ENCODE measurements at regions of chr3 and their contacts with region 1.

Region 1: GRCh38 chr3:149657926-149658733 is at the start of gene WWTR1:
- DNase-seq: peak; percentile 26
- H3K4me3 Mint-ChIP-seq: peak within 1 kb of the TSS; percentile 90
- H3K27ac Mint-ChIP-seq: peak within 1 kb of the TSS; percentile 73
- H3K4me1 Mint-ChIP-seq: peaks cover 22% of the 10 kb centered on the region
- H3K27me3 Mint-ChIP-seq: peaks cover 39% of the 10 kb centered on the region
- total RNA-seq, gene WWTR1: 2.6 TPM in 2 replicates

Region 2: DNA sequence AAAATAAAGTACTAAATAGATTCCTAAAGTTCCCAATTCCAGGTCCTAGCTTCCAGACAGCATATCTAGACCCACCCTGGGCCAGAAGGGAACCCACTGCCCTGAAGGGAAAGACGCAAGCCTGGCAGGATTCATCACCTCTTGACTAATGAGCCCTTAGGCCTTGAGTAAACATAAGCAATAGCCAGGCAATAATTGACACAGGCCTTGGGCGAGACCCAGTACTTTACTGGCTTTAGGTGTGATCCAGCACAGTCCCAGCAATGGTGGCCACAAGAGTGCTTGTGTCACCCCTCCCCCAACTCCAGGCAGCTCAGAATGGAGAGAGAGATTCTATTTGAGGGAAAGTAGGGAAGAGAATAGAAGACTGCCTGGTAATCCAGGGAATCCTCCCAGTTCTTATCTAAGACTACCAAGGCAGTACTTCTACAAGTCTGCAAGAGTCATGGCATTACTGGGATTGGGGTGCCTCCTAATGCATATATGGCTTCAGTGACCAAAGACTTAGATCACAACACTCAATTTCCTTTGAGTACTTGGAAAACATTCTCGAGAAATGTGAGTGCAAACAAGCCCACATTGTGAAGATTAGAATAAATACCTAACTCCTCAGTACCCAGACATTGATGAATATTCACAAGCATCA is 30.1 kb after region 1 on chr3:
- intact Hi-C with region 1: no loop called
- DNase-seq: no peak
- H3K4me3 Mint-ChIP-seq: no peak overlapping the region
- H3K27ac Mint-ChIP-seq: no peak overlapping the region
- H3K4me1 Mint-ChIP-seq: no peaks in the 10 kb centered on the region
- H3K27me3 Mint-ChIP-seq: peaks cover 9% of the 10 kb centered on the region

Region 3: GRCh38 chr3:149752051-149752787 is 94.1 kb after region 1 on chr3 and contains the start of gene COMMD2:
- intact Hi-C with region 1: loop called (anchors 2 kb)
- DNase-seq: peak; percentile 68
- H3K4me3 Mint-ChIP-seq: peak within 1 kb of the TSS; percentile 97
- H3K27ac Mint-ChIP-seq: peak within 1 kb of the TSS; percentile 87
- H3K4me1 Mint-ChIP-seq: peaks cover 16% of the 10 kb centered on the region
- H3K27me3 Mint-ChIP-seq: peaks cover 8% of the 10 kb centered on the region
- total RNA-seq, gene COMMD2: 40.3 and 43.3 TPM in 2 replicates

Measured in activated T-helper 2 cell treated with anti-CD3 and anti-CD28 coated beads, Interferon-gamma antibody, Interleukin-2, Interleukin-4, amounts not matched to agents 10 μg/mL and 5 μg/mL and 100 μg/mL, durations not matched to agents 14 hours and 24 hours and 36 hours (primary cell).